RWPE1 (cell line): ENCODE measurements at regions of chr12 and their contacts with region 1.

Region 1: DNA sequence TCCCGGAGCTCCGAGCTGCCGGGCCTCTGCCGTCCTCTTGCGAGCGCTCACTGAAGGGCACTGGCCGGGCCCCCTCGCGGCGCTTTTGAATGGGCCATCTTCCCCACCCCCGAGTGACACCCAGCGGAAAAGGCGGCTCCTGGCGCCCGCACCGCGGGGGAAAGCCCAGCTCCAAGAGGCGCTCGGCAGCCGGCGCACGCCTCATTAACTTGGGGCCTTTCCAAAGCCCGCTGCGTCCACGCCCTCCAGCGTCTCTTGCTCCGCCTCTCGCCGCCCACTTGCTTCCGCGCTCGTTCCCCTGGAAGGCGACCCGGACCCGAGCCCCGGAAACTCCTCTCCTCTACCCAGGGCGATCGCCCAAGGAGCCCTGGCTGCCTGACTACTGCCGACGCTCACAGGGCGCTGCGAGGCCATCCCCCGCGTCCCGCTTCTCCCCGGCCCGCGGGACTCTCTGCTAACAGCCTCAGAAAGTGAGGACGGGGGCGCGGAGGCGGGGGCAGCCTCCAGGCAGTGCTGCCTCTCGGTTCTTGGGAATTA is at the start of gene PHLDA1:
- DNase-seq: peak; percentile 92
- H3K27ac ChIP-seq: peak within 1 kb of the TSS; percentile 95
- CTCF ChIP-seq: peak; percentile 78

Region 2: GRCh38 chr12:75666939-75667334 is 364.7 kb before region 1 on chr12:
- CTCF ChIA-PET with region 1: no interaction called
- POLR2A ChIA-PET with region 1: interaction called, 17 read pairs
- DNase-seq: no peak
- H3K27ac ChIP-seq: no peak overlapping the region
- CTCF ChIP-seq: no peak